ENCODE measurements at regions of chr7 and their contacts with region 1.

Region 1: DNA sequence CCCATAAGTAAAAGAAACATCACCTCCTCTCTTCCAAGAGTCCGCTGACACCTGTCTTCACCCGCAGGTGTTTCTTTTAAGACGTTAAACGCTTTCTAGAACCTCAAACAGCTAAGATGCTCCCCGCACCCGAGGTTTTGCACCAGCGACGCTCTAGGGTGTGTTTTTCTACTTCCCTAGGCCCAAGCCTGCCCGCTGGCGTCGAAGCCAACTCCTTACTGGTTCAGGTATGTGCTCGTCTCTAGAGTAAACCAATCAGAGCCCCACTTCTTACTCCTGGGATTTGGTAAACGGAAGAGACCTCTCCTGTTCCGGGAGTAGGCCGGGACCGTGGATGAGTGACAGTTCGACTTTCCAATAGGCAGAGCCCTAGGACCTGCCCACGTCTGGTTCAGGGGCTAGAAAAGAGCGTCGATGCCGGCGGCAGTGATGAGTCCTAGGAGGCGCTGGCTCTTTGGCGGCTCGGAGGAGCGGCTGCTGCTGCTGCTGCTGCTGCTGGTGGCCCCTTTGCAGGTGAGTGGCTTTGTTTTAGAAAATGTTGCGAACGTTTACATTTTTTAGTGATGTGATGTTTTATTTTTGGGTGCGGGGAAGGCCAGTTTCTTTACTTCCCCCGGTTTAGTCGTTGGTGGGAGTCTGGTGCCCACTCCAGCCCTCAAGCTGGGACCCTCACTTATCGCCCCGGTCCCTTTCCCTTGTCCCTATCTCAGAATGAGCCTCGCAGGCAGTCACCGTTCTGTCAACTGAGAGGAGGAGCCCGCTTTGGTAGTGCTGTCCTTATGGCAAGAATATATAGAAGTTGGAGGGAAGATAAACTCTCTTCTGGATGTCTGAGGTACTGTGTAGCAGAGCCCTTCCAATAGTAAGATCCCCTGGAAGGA is at the start of gene BPGM:
- DNase-seq: peak; percentile 99
- ATAC-seq: peak; percentile 94
- H3K4me3 ChIP-seq: peak within 1 kb of the TSS; percentile 70 to 93 (median 79)
- H3K4me3 Mint-ChIP-seq: no peak within 1 kb of the TSS
- H3K27ac ChIP-seq: peak within 1 kb of the TSS; percentile 84 to 85
- H3K27ac Mint-ChIP-seq: no peak within 1 kb of the TSS
- H3K4me1 ChIP-seq: peaks cover 12 to 26% of the 10 kb centered on the region in 2 donors
- H3K4me1 Mint-ChIP-seq: peaks cover 21% of the 10 kb centered on the region
- H3K27me3 ChIP-seq: no peaks in the 10 kb centered on the region
- H3K27me3 Mint-ChIP-seq: no peaks in the 10 kb centered on the region
- CTCF ChIP-seq: peak; percentile 9
- total RNA-seq, gene BPGM: 8.7 and 9.7 TPM in 2 replicates

Region 2: DNA sequence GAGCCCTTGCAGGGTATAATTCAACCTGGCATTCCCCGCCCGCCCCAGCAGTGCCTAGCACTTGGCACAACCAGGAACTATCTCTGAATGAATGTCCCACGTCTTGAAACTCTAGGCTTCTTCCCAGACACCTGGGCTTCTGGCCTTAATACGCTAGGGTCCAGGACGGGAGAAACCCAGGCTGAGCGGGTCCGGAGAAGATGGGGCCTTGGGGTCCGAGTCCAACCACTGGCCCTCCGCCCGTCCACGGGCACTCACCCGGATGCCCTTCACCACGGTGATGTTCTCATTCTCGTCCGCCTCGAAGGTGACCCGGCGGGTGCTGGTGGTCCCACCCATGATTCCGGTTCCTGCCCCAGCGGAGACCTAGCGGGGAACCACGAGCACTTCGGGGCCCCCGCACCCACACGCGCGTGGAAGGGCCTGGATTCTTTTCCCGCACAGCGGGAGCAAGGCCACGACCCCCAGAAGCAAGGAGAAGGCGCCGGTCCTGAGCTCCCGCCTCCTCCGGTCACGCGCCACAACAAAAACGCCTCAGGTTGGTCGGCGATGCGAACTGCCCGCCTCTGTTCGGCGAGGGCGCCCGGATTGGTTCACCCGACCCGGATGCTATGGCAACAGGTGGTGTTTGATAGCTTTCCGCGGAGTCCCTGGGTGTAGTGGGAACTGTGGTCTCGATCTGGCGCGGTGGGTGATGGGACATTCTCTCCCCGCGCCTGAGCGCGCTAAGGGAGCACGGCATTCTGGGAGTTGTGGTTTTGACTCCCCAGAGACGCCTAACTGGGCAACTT is 1564.9 kb before region 1 on chr7 and contains the start of gene CHCHD3:
- CTCF ChIA-PET with region 1: no interaction called
- POLR2A ChIA-PET with region 1: no interaction called
- intact Hi-C with region 1: loop called (anchors 5 kb)
- DNase-seq: peak; percentile 97
- ATAC-seq: peak; percentile 99
- H3K4me3 ChIP-seq: peak within 1 kb of the TSS; percentile 71 to 96 (median 91)
- H3K4me3 Mint-ChIP-seq: peak within 1 kb of the TSS; percentile 93
- H3K27ac ChIP-seq: peak within 1 kb of the TSS; percentile 79 to 98
- H3K27ac Mint-ChIP-seq: peak within 1 kb of the TSS; percentile 95
- H3K4me1 ChIP-seq: peaks cover 11% of the 10 kb centered on the region in 2 donors
- H3K4me1 Mint-ChIP-seq: peaks cover 24% of the 10 kb centered on the region
- H3K27me3 ChIP-seq: no peaks in the 10 kb centered on the region
- H3K27me3 Mint-ChIP-seq: peaks cover 6% of the 10 kb centered on the region
- CTCF ChIP-seq: no peak
- total RNA-seq, gene CHCHD3: 38.4 and 40.8 TPM in 2 replicates

Region 3: DNA sequence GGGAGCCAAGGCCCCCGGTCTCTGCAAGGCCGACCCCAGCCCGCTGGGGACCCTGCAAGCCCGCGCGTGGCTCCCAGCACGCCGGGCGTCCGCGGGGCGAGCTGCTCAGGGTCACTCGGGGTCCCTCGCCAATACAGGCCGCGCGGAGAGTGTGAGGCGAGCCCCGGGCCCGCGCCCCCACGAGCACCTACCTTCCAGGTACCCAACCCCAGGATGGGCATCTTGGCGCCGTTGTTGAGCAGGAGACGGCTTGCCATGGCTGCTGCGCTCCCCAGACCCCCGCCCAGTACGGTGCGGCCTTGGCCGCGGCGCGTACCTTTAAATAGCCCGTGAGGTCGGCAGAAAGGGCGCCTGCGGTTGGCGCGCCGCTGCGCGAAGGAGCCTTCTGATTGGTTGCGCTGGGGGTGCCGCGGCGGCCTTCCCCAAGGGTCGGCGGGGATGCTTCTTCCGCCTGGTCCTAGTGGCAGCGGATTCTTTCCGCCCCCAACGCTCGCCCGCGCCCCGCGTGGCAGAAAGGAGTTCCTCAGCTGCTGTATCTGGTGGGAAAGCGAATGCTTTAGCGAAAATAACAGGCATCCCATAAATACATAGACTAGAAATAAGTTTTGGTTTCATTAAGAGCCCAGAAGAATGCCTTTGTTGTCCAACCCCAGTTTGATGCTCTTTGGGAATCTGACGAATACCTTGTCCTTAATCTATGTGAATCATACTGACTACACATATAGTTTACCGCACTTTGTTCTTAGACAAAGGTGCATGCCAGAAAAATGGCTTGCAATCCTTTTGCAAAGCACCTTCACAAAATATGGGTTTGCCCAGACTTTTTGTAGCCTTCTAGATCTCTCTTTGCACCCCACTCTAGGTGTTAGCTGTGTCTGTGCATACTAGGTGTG is 187.6 kb before region 1 on chr7 and contains the start of gene AKR1B1:
- CTCF ChIA-PET with region 1: interaction called, 3 read pairs
- POLR2A ChIA-PET with region 1: no interaction called
- intact Hi-C with region 1: loop called (anchors 1 kb)
- DNase-seq: peak; percentile 94
- ATAC-seq: peak; percentile 89
- H3K4me3 ChIP-seq: peak within 1 kb of the TSS; percentile 42 to 90 (median 84)
- H3K4me3 Mint-ChIP-seq: peak within 1 kb of the TSS; percentile 92
- H3K27ac ChIP-seq: peak within 1 kb of the TSS; percentile 53 to 79
- H3K27ac Mint-ChIP-seq: peak within 1 kb of the TSS; percentile 91
- H3K4me1 ChIP-seq: peaks cover 22 to 24% of the 10 kb centered on the region in 2 donors
- H3K4me1 Mint-ChIP-seq: peaks cover 47% of the 10 kb centered on the region
- H3K27me3 ChIP-seq: peaks cover 0 to 3% (median 0%) of the 10 kb centered on the region in 4 experiments
- H3K27me3 Mint-ChIP-seq: no peaks in the 10 kb centered on the region
- CTCF ChIP-seq: peak; percentile 77
- total RNA-seq, gene AKR1B1: 89.6 and 94.7 TPM in 2 replicates

Region 4: DNA sequence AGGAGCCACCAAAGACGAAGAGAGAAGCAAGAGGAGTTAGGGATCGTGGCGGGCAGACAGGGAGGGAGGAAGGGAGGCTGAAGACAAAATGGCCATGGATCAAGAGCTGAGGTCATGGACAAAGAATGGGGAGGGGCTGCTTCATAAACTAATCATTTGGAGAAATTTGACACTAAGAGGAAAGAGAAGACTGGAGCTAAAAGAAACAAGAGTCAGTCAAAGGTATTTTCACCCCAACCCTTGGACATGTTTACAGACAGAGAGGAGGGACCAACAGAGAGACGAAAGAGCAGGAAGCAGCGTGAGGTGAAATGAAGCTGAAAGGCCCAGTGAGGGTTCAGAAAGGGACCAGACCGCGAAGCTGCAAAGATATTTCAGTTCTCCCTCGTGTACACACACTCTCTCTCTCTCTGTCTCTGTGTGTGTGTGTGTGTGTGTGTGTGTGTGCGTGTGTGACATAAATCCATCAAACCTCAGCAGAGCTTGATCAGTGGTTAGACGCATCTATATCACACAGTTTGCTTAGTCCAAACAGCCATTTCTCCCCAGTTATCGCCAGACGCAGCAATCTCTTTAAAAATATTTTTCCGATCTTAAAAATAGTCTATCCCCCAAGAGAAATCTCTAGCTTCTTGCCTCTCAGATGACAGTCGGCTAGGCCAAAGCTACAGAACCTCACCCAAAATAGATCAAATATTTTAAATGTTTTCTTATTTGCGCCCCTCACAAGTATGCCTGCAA is 120.3 kb after region 1 on chr7:
- CTCF ChIA-PET with region 1: no interaction called
- POLR2A ChIA-PET with region 1: interaction called, 9 read pairs
- intact Hi-C with region 1: loop called (anchors 5 kb)
- DNase-seq: peak; percentile 83
- ATAC-seq: peak; percentile 93
- H3K4me3 ChIP-seq: no peak overlapping the region
- H3K4me3 Mint-ChIP-seq: peak overlapping the region; percentile 59
- H3K27ac ChIP-seq: peak overlapping the region; percentile 66 to 80
- H3K27ac Mint-ChIP-seq: peak overlapping the region; percentile 94
- H3K4me1 ChIP-seq: peaks cover 23% of the 10 kb centered on the region in 2 donors
- H3K4me1 Mint-ChIP-seq: peaks cover 29% of the 10 kb centered on the region
- H3K27me3 ChIP-seq: no peaks in the 10 kb centered on the region
- H3K27me3 Mint-ChIP-seq: no peaks in the 10 kb centered on the region
- CTCF ChIP-seq: no peak

Region 5: DNA sequence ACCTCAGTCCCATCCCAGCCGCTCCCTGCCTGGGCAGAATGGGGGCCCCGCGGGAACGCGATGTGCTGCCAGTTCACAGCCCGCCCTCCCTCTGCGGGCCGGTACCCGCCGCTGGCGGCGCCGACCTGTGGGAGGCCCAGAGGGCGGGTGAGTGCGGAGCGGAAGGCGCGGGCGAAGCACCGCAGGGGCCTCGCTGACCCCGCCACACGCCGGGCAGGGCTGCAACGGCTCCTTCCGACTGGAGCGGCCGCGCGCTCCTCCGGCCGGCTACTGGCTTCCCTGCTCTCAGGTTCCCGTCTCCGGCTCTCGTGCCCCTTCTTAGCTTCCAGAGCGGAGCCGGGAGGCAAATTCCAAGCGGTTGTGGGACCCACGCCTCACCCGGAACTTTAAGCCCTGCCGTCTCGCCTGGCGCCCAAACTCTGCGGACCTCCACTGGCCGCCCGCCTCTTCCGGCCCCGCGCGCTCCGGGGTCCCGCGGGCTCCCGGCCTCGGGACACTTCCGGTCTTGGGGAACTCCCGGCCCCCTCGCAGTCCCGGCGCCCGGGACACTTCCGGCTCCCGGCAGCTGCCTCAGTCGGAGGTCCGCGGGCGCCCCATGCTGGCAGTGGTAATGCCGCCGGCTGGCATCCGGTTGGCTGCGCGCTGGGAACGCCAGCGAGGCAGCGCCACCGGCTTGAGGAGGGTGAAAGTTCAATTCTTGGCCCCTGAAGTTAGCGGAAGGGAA is 523.8 kb after region 1 on chr7 and contains the start of gene CYREN:
- CTCF ChIA-PET with region 1: interaction called, 5 read pairs
- POLR2A ChIA-PET with region 1: interaction called, 9 read pairs
- intact Hi-C with region 1: loop called (anchors 1 kb)
- DNase-seq: peak; percentile 92
- ATAC-seq: peak; percentile 77
- H3K4me3 ChIP-seq: peak within 1 kb of the TSS; percentile 72 to 93 (median 83)
- H3K4me3 Mint-ChIP-seq: peak within 1 kb of the TSS; percentile 94
- H3K27ac ChIP-seq: peak within 1 kb of the TSS; percentile 96 to 97
- H3K27ac Mint-ChIP-seq: peak within 1 kb of the TSS; percentile 93
- H3K4me1 ChIP-seq: peaks cover 22 to 42% of the 10 kb centered on the region in 2 donors
- H3K4me1 Mint-ChIP-seq: peaks cover 60% of the 10 kb centered on the region
- H3K27me3 ChIP-seq: no peaks in the 10 kb centered on the region
- H3K27me3 Mint-ChIP-seq: no peaks in the 10 kb centered on the region
- CTCF ChIP-seq: peak; percentile 77
- total RNA-seq, gene CYREN: 51.6 and 54.6 TPM in 2 replicates

Region 6: GRCh38 chr7:135662373-135663114 is 1015.9 kb after region 1 on chr7 and contains the start of gene STMP1:
- CTCF ChIA-PET with region 1: no interaction called
- POLR2A ChIA-PET with region 1: no interaction called
- intact Hi-C with region 1: loop called (anchors 1 kb)
- DNase-seq: peak; percentile 95
- ATAC-seq: peak; percentile 99
- H3K4me3 ChIP-seq: peak within 1 kb of the TSS; percentile 88 to 99 (median 97)
- H3K4me3 Mint-ChIP-seq: peak within 1 kb of the TSS; percentile 91
- H3K27ac ChIP-seq: peak within 1 kb of the TSS; percentile 56 to 77
- H3K27ac Mint-ChIP-seq: peak within 1 kb of the TSS; percentile 81
- H3K4me1 ChIP-seq: peaks cover 15 to 32% of the 10 kb centered on the region in 2 donors
- H3K4me1 Mint-ChIP-seq: peaks cover 32% of the 10 kb centered on the region
- H3K27me3 ChIP-seq: no peaks in the 10 kb centered on the region
- H3K27me3 Mint-ChIP-seq: no peaks in the 10 kb centered on the region
- CTCF ChIP-seq: peak; percentile 75
- total RNA-seq, gene STMP1: 30.3 and 33.5 TPM in 2 replicates